Activated B cell treated with CpG ODN at 0.5 μM for 24 hours (primary cell): ENCODE measurements at regions of chr19 and their contacts with region 1.

Region 1: DNA sequence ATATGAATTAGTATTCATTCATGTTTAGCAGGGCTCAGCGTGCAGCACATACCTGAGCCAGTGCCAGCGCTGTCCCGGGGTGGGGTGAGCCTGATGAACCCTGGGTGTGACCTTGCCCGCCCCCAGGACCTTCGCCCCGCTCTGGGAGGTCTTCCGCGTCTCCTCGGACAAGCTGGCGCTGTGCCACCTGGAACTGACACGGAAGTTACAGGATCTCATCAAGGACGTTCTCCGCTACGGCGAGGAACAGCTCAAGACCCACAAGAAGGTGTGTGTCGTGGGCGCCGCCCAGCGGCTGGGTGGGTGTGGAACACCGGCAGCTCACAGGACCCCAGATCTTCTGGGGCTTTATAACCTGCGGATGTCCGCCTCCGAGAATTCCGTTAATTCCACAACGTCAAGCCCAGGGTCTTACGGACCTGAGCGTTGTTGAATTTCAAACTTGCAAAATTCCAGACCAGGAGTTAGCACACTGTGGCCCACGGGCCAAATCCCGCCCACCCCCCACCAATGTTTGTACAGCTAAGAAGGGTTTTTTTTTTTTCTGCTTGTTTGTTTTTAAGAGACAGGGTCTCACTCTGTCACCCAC is 15.4 kb downstream of the FCHO1 start:
- DNase-seq: peak; percentile 57
- ATAC-seq: peak; percentile 77
- H3K4me3 Mint-ChIP-seq: no peak overlapping the region
- H3K27ac Mint-ChIP-seq: no peak overlapping the region
- H3K4me1 Mint-ChIP-seq: peaks cover 23% of the 10 kb centered on the region
- H3K27me3 Mint-ChIP-seq: no peaks in the 10 kb centered on the region
- CTCF ChIP-seq: no peak

Region 2: DNA sequence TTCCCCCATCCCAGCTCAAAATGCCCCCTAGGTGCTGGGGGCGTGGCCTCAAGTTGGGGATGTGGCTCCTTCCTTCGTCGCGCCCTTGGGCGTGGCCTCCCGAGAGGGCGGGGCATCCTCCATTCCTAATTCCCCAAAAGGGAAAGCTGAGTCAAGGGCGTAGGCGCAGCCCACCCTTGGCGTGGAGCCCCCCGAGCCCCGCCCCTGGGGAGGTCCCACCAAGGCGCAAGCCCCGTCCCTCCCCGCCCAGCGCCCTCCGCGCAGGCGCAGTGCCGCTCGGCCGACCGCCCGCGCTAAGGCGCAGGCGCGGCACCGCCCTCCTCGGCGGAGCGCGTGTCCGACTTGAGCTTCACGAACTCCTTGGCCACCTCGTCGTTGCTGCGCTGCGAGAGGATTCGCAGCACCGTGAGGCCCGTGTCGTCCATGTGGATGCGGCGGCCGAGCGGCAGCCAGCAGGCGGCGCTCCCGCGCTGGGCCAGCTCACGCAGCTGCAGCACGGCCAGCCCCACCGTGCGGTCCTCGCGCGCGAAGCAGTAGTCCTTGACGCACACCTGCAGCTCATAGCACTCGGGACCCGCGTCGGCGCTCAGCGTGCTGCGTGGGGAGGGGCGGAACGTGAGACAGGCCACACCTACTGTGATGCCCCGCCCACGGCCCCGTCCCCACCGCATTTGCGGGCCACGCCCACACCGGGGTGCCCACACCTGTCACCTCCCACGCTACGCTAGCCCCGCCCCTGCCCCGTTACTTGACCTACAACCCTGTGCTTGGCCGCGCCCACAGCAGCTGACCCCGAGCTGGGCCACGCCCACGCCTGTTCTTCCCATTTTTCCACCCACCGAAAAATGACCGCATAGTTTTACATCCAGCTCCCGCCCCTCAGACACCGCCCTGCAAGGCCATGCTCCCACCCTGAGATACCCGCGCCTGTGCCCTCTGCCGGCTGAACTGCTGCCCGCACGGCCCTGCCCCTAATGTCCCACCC is 160.6 kb before region 1 on chr19:
- CTCF ChIA-PET with region 1: interaction called, 10 read pairs
- POLR2A ChIA-PET with region 1: interaction called, 7 read pairs
- intact Hi-C with region 1: loop called (anchors 2 kb)
- DNase-seq: peak; percentile 80
- ATAC-seq: peak; percentile 92
- H3K4me3 Mint-ChIP-seq: peak overlapping the region; percentile 83
- H3K27ac Mint-ChIP-seq: peak overlapping the region; percentile 69
- H3K4me1 Mint-ChIP-seq: peaks cover 15% of the 10 kb centered on the region
- H3K27me3 Mint-ChIP-seq: peaks cover 30% of the 10 kb centered on the region
- CTCF ChIP-seq: no peak

Region 3: GRCh38 chr19:17626456-17627015 is 140.1 kb before region 1 on chr19:
- CTCF ChIA-PET with region 1: no interaction called
- POLR2A ChIA-PET with region 1: no interaction called
- intact Hi-C with region 1: no loop called
- DNase-seq: no peak
- ATAC-seq: no peak
- H3K4me3 Mint-ChIP-seq: no peak overlapping the region
- H3K27ac Mint-ChIP-seq: no peak overlapping the region
- H3K4me1 Mint-ChIP-seq: no peaks in the 10 kb centered on the region
- H3K27me3 Mint-ChIP-seq: peaks cover 7% of the 10 kb centered on the region
- CTCF ChIP-seq: no peak

Region 4: DNA sequence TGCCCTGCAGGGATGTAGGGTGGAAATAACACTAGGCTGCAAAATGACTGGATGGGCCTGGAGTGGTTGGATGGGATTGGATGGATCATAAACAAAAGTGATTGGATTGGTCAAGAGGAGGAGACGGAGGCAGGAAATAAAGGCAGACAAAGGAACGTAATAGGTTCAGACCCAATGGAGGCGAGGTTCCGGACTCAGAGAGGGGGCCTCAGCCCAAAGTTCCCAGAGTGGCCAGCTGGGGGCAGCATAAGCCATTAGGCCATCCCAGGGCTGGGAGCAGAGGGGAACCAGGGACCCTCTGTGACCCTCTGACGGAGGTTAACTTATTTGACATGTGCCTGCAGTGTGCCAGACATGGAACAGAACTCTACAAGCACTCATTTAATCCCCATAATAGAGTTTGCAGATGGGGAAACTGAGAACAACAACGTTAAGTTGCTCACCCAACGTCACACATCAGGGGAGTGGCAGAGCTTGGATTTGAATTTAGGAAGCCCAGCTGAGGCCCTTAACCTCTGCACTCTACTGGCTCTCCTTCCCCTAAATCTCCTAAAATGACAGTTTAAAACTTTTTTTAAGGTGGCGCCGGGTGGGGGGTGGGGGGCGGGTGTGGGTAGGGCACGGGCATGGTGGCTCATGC is 62.7 kb before region 1 on chr19:
- CTCF ChIA-PET with region 1: interaction called, 81 read pairs
- POLR2A ChIA-PET with region 1: interaction called, 6 read pairs
- intact Hi-C with region 1: loop called (anchors 1 kb)
- DNase-seq: peak; percentile 70
- ATAC-seq: peak; percentile 97
- H3K4me3 Mint-ChIP-seq: no peak overlapping the region
- H3K27ac Mint-ChIP-seq: no peak overlapping the region
- H3K4me1 Mint-ChIP-seq: peaks cover 2% of the 10 kb centered on the region
- H3K27me3 Mint-ChIP-seq: peaks cover 8% of the 10 kb centered on the region
- CTCF ChIP-seq: peak; percentile 64

Region 5: DNA sequence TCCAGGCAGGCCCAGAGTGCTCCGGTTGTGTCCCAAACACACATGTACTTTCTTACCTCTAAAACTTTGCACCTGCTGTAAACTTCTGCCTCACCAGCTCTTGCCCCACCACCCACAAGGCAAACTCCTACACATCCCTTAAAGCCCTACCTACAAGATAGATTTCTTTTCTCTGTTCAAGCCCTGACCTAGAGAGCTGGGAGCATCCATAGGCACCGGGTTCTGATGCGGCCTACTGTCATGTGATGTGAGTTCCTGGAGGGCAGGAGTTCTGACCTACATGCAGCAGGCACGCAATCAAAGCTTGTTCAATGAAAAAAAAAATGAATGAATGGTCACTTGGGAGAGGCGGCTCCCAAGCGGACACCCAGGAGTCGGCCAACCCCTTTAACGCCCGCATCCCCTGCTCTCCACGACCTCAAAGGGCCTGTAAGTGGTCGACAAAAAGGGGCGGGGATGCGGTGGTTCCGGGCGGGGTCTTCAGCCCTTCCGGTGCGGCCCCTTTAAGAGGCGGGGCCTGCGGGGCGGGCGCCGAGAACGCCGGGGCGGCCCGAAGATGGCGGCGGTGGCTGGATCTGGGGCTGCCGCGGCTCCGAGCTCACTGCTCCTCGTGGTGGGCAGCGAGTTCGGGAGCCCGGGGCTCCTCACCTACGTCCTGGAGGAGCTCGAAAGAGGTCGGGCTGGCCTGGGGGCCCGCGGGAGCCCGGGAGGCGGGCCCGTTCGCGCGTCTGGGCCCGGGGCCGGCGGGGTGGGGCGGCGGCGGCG is 47.5 kb before region 1 on chr19 and contains the start of gene MAP1S:
- CTCF ChIA-PET with region 1: interaction called, 22 read pairs
- POLR2A ChIA-PET with region 1: interaction called, 7 read pairs
- intact Hi-C with region 1: no loop called
- DNase-seq: peak; percentile 74
- ATAC-seq: peak; percentile 91
- H3K4me3 Mint-ChIP-seq: peak within 1 kb of the TSS; percentile 89
- H3K27ac Mint-ChIP-seq: peak within 1 kb of the TSS; percentile 77
- H3K4me1 Mint-ChIP-seq: peaks cover 38% of the 10 kb centered on the region
- H3K27me3 Mint-ChIP-seq: no peaks in the 10 kb centered on the region
- CTCF ChIP-seq: no peak
- total RNA-seq, gene MAP1S: 65.6 and 80.5 TPM in 2 replicates

Region 6: GRCh38 chr19:17725422-17726078 is 41.1 kb before region 1 on chr19:
- CTCF ChIA-PET with region 1: interaction called, 22 read pairs
- POLR2A ChIA-PET with region 1: interaction called, 7 read pairs
- intact Hi-C with region 1: loop called (anchors 1 kb)
- DNase-seq: no peak
- ATAC-seq: peak; percentile 54
- H3K4me3 Mint-ChIP-seq: no peak overlapping the region
- H3K27ac Mint-ChIP-seq: no peak overlapping the region
- H3K4me1 Mint-ChIP-seq: peaks cover 26% of the 10 kb centered on the region
- H3K27me3 Mint-ChIP-seq: no peaks in the 10 kb centered on the region
- CTCF ChIP-seq: no peak

Region 7: DNA sequence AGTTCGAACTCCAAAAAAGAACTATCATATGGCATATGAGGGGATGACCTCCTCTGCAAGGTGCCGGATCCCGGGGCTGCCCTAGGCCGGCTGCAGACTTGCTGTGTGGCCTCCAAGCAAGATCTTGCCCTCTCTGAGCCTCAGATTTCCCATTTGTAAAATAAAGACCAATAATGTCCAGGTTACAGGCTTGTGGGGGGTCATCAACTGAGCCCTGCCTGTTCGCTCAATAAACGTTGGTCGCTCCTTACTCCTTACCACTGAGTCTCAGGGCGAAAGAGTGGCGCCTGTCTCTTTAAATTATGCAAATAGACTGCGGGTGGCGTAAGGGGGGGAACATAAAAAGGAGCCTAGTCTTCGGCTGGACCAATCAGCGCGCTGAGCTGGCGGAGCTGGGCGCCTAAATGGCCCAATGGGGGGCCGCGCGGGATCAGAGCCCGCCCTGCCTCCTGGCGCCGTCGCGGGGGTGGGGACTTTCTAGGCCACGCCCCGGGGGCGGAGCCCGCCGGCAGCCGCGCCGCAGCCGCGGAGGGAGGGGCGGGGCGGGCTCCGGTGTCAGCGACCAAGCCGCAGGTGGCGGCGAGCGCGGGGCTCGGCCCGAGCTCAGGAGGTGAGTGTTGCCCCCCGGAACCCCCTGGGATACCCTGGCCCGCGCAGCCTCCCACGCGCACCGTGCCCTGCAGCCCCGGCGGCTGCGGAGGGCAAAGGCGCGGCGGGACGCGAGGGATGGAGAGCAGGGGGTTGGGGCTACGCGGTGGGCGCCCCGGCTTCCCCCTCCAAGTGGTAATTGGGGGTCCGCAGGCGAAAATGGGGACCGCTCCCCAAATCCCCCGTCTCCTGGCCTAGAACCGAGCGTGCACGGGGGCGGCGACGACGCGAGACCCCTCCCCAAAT is 19.2 kb before region 1 on chr19:
- CTCF ChIA-PET with region 1: interaction called, 7 read pairs
- POLR2A ChIA-PET with region 1: interaction called, 16 read pairs
- intact Hi-C with region 1: no loop called
- DNase-seq: peak; percentile 97
- ATAC-seq: peak; percentile 83
- H3K4me3 Mint-ChIP-seq: peak overlapping the region; percentile 79
- H3K27ac Mint-ChIP-seq: peak overlapping the region; percentile 70
- H3K4me1 Mint-ChIP-seq: peaks cover 59% of the 10 kb centered on the region
- H3K27me3 Mint-ChIP-seq: no peaks in the 10 kb centered on the region
- CTCF ChIP-seq: no peak

Region 8: GRCh38 chr19:17811681-17812080 is 45.0 kb after region 1 on chr19:
- CTCF ChIA-PET with region 1: no interaction called
- POLR2A ChIA-PET with region 1: no interaction called
- intact Hi-C with region 1: no loop called
- DNase-seq: no peak
- ATAC-seq: no peak
- H3K4me3 Mint-ChIP-seq: no peak overlapping the region
- H3K27ac Mint-ChIP-seq: no peak overlapping the region
- H3K4me1 Mint-ChIP-seq: peaks cover 6% of the 10 kb centered on the region
- H3K27me3 Mint-ChIP-seq: peaks cover 7% of the 10 kb centered on the region
- CTCF ChIP-seq: no peak